Ovary (tissue), 10 donors: ENCODE measurements at regions of chr3 and their contacts with region 1.

Region 1: GRCh38 chr3:9862391-9863057 is 17.5 kb downstream of the CIDEC start:
- DNase-seq: peak; percentile 60 to 78 (median 68)
- H3K4me3 ChIP-seq: peak overlapping the region; percentile 29
- H3K27ac ChIP-seq: no peak overlapping the region
- H3K4me1 ChIP-seq: peaks cover 13% of the 10 kb centered on the region
- H3K27me3 ChIP-seq: no peaks in the 10 kb centered on the region
- CTCF ChIP-seq: peak in 1 of 3 donors; percentile 16
- EP300 ChIP-seq: no peak
- POLR2A ChIP-seq: no peak

Region 2: GRCh38 chr3:9888540-9888939 is 26.0 kb after region 1 on chr3:
- intact Hi-C with region 1: loop called in 1 of 4 experiments (anchors 2 kb)
- DNase-seq: no peak
- H3K4me3 ChIP-seq: no peak overlapping the region
- H3K27ac ChIP-seq: no peak overlapping the region
- H3K4me1 ChIP-seq: peaks cover 4% of the 10 kb centered on the region
- H3K27me3 ChIP-seq: no peaks in the 10 kb centered on the region
- CTCF ChIP-seq: no peak
- EP300 ChIP-seq: no peak
- POLR2A ChIP-seq: no peak

Region 3: DNA sequence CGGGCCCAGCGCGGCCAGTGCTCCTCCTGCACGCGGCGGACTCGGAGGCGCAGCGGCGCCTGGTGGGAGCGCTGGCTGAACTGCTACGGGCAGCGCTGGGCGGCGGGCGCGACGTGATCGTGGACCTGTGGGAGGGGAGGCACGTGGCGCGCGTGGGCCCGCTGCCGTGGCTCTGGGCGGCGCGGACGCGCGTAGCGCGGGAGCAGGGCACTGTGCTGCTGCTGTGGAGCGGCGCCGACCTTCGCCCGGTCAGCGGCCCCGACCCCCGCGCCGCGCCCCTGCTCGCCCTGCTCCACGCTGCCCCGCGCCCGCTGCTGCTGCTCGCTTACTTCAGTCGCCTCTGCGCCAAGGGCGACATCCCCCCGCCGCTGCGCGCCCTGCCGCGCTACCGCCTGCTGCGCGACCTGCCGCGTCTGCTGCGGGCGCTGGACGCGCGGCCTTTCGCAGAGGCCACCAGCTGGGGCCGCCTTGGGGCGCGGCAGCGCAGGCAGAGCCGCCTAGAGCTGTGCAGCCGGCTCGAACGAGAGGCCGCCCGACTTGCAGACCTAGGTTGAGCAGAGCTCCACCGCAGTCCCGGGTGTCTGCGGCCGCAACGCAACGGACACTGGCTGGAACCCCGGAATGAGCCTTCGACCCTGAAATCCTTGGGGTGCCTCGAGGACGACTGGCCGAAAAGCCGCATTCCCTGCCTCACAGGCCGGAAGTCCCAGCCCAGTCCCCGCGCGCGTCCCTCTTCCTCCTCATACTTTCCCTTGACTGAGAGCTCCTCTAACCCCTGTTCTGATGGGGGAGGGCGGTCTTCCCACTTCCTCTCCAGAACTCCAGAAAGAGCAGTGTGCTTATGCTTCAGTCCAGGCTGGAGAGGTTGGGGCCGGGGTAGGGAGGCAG is 53.0 kb after region 1 on chr3:
- intact Hi-C with region 1: loop called in 1 of 4 experiments (anchors 5 kb)
- DNase-seq: peak; percentile 77 to 85 (median 79)
- H3K4me3 ChIP-seq: peak overlapping the region; percentile 59
- H3K27ac ChIP-seq: peak overlapping the region; percentile 76 to 82
- H3K4me1 ChIP-seq: peaks cover 13% of the 10 kb centered on the region
- H3K27me3 ChIP-seq: no peaks in the 10 kb centered on the region
- CTCF ChIP-seq: peak in 2 of 3 donors; percentile 53 to 63
- EP300 ChIP-seq: no peak
- POLR2A ChIP-seq: peak; percentile 20